Activated CD4-positive, alpha-beta memory T cell treated with anti-CD3 and anti-CD28 coated beads, Interleukin-2, amount 10 ng/mL, durations not matched to agents 7 days and 5 days (primary cell): ENCODE measurements at regions of chr6 and their contacts with region 1.

Region 1: GRCh38 chr6:134097114-134097707 is 44.8 kb upstream of the SLC2A12 start:
- DNase-seq: peak; percentile 63
- H3K4me3 Mint-ChIP-seq: no peak overlapping the region
- H3K27ac Mint-ChIP-seq: no peak overlapping the region
- H3K4me1 Mint-ChIP-seq: peaks cover 6% of the 10 kb centered on the region
- H3K27me3 Mint-ChIP-seq: peaks cover 12% of the 10 kb centered on the region

Region 2: DNA sequence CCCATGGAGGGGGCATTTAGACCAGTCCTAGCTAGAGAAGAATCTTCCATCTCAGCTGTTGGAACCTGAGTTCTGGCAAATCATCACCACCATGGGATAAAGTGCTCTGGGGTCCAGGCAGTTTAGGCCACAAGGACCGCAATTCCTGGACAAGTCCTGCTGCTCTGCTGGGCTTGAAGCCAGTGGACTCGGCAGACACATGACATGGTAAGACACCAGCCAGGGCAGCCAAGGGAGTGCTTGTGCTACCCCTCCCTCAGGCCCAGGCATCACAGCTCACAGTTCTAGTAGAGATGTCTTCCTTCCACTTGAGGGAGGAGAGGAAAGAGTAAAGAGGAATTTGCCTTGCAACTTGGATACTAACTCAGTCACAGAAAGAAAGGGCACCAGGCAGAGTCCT is 610.0 kb before region 1 on chr6:
- CTCF ChIA-PET with region 1: no interaction called
- POLR2A ChIA-PET with region 1: no interaction called
- DNase-seq: no peak
- H3K4me3 Mint-ChIP-seq: no peak overlapping the region
- H3K27ac Mint-ChIP-seq: no peak overlapping the region
- H3K4me1 Mint-ChIP-seq: no peaks in the 10 kb centered on the region
- H3K27me3 Mint-ChIP-seq: no peaks in the 10 kb centered on the region

Region 3: GRCh38 chr6:133837801-133838349 is 259.3 kb before region 1 on chr6:
- CTCF ChIA-PET with region 1: interaction called, 17 read pairs
- POLR2A ChIA-PET with region 1: no interaction called
- DNase-seq: peak; percentile 61
- H3K4me3 Mint-ChIP-seq: peak overlapping the region; percentile 56
- H3K27ac Mint-ChIP-seq: no peak overlapping the region
- H3K4me1 Mint-ChIP-seq: peaks cover 6% of the 10 kb centered on the region
- H3K27me3 Mint-ChIP-seq: peaks cover 13% of the 10 kb centered on the region

Region 4: GRCh38 chr6:133939778-133940667 is 157.2 kb before region 1 on chr6:
- CTCF ChIA-PET with region 1: interaction called, 11 read pairs
- POLR2A ChIA-PET with region 1: no interaction called
- DNase-seq: no peak
- H3K4me3 Mint-ChIP-seq: no peak overlapping the region
- H3K27ac Mint-ChIP-seq: no peak overlapping the region
- H3K4me1 Mint-ChIP-seq: peaks cover 2% of the 10 kb centered on the region
- H3K27me3 Mint-ChIP-seq: peaks cover 18% of the 10 kb centered on the region

Region 5: DNA sequence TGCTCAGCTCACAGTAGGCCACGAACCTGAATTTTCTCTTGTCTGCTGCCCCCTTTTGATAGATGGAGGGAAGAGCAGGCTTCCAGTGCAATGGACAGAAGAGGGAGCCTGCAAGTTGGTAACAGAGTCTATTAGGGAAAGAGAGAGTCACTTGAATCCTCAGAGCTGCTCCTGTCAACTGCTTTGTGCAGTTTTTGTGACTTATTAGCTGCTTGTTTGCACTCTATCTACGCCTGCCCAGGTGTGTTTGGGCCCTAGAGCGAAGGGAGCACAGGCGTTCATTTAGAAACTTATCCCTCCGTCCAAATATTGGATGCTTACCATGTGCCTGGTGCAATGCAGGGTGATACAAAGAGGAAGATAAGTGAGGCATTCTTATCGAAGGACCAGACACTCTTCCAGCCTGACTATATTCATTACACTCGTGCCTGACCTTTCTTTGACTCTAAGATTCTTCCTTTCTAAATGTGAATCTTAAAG is 33.2 kb before region 1 on chr6:
- CTCF ChIA-PET with region 1: interaction called, 38 read pairs
- POLR2A ChIA-PET with region 1: no interaction called
- DNase-seq: peak; percentile 64
- H3K4me3 Mint-ChIP-seq: no peak overlapping the region
- H3K27ac Mint-ChIP-seq: no peak overlapping the region
- H3K4me1 Mint-ChIP-seq: no peaks in the 10 kb centered on the region
- H3K27me3 Mint-ChIP-seq: no peaks in the 10 kb centered on the region

Region 6: GRCh38 chr6:134111062-134111677 is 14.0 kb after region 1 on chr6:
- CTCF ChIA-PET with region 1: interaction called, 12 read pairs
- POLR2A ChIA-PET with region 1: no interaction called
- DNase-seq: peak; percentile 52
- H3K4me3 Mint-ChIP-seq: no peak overlapping the region
- H3K27ac Mint-ChIP-seq: no peak overlapping the region
- H3K4me1 Mint-ChIP-seq: peaks cover 7% of the 10 kb centered on the region
- H3K27me3 Mint-ChIP-seq: peaks cover 20% of the 10 kb centered on the region

Region 7: GRCh38 chr6:134464690-134465411 is 367.6 kb after region 1 on chr6:
- CTCF ChIA-PET with region 1: no interaction called
- POLR2A ChIA-PET with region 1: no interaction called
- DNase-seq: no peak
- H3K4me3 Mint-ChIP-seq: no peak overlapping the region
- H3K27ac Mint-ChIP-seq: no peak overlapping the region
- H3K4me1 Mint-ChIP-seq: peaks cover 10% of the 10 kb centered on the region
- H3K27me3 Mint-ChIP-seq: no peaks in the 10 kb centered on the region